ENCODE measurements at regions of chr3 and their contacts with region 1.

Region 1: GRCh38 chr3:130748981-130749380 is 2.4 kb upstream of the PIK3R4 start:
- DNase-seq: no peak
- H3K4me3 Mint-ChIP-seq: no peak overlapping the region
- H3K27ac Mint-ChIP-seq: no peak overlapping the region
- H3K4me1 Mint-ChIP-seq: peaks cover 26% of the 10 kb centered on the region
- H3K27me3 Mint-ChIP-seq: peaks cover 4% of the 10 kb centered on the region

Region 2: GRCh38 chr3:130640027-130640426 is 109.0 kb before region 1 on chr3:
- CTCF ChIA-PET with region 1: no interaction called
- DNase-seq: no peak
- H3K4me3 Mint-ChIP-seq: no peak overlapping the region
- H3K27ac Mint-ChIP-seq: no peak overlapping the region
- H3K4me1 Mint-ChIP-seq: no peaks in the 10 kb centered on the region
- H3K27me3 Mint-ChIP-seq: peaks cover 3% of the 10 kb centered on the region

Region 3: GRCh38 chr3:130759699-130760338 is 10.8 kb after region 1 on chr3:
- CTCF ChIA-PET with region 1: interaction called, 11 read pairs
- DNase-seq: peak; percentile 68
- H3K4me3 Mint-ChIP-seq: no peak overlapping the region
- H3K27ac Mint-ChIP-seq: no peak overlapping the region
- H3K4me1 Mint-ChIP-seq: peaks cover 12% of the 10 kb centered on the region
- H3K27me3 Mint-ChIP-seq: peaks cover 6% of the 10 kb centered on the region

Measured in activated naive CD4-positive, alpha-beta T cell treated with anti-CD3 and anti-CD28 coated beads, Interleukin-2, amount 10 ng/mL, durations not matched to agents 7 days and 5 days (primary cell).